WTC11 (cell line): ENCODE measurements at regions of chr22 and their contacts with region 1.

Region 1: GRCh38 chr22:26461188-26461810 is 22.3 kb downstream of the HPS4 start:
- DNase-seq: peak; percentile 88
- ATAC-seq: peak; percentile 99
- H3K4me3 Mint-ChIP-seq: no peak overlapping the region
- H3K27ac Mint-ChIP-seq: peak overlapping the region; percentile 84; the same call in 1 of the 2 replicates
- H3K4me1 Mint-ChIP-seq: peaks cover 4% of the 10 kb centered on the region; the same call in 1 of the 2 replicates
- H3K27me3 Mint-ChIP-seq: no peaks in the 10 kb centered on the region
- CTCF ChIP-seq: peak; percentile 57; the same call in 1 of the 2 replicates

Region 2: DNA sequence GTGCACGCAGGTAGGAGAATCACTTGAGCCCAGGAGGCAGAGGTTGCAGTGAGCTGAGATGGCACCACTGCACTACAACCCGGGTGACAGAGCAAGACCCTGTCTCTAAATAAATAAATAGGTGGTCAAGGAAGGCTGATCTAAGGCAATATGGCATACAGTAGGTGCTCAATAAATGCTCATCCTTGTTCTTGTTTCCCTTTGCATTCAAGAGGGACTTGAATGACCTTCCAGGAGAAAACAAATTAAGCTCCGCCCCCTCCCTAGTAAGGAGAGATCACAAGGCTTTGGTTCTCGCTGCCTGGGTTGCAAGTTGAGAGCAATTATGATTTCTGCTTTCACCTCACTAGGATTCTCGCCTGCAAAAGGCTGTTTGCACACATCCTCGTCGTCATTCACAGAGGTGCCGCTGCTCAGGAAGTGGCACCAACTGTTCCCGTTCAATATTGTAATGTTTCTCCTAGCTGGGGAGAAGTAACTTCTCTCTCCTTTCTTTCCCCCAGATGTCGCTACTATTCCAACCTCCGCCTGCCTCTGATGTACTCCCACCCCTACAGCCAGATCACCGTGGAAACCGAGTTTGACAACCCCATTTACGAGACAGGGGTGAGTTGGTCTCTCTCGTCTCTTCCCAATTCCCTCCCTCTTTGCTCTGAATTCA is 84.0 kb before region 1 on chr22:
- CTCF ChIA-PET with region 1: interaction called, 20 read pairs
- POLR2A ChIA-PET with region 1: no interaction called
- DNase-seq: no peak
- ATAC-seq: peak; percentile 89
- H3K4me3 Mint-ChIP-seq: peak overlapping the region; percentile 57
- H3K27ac Mint-ChIP-seq: no peak overlapping the region; the same call in 1 of the 2 replicates
- H3K4me1 Mint-ChIP-seq: peaks cover 21% of the 10 kb centered on the region
- H3K27me3 Mint-ChIP-seq: peaks cover 36% of the 10 kb centered on the region
- CTCF ChIP-seq: no peak

Region 3: DNA sequence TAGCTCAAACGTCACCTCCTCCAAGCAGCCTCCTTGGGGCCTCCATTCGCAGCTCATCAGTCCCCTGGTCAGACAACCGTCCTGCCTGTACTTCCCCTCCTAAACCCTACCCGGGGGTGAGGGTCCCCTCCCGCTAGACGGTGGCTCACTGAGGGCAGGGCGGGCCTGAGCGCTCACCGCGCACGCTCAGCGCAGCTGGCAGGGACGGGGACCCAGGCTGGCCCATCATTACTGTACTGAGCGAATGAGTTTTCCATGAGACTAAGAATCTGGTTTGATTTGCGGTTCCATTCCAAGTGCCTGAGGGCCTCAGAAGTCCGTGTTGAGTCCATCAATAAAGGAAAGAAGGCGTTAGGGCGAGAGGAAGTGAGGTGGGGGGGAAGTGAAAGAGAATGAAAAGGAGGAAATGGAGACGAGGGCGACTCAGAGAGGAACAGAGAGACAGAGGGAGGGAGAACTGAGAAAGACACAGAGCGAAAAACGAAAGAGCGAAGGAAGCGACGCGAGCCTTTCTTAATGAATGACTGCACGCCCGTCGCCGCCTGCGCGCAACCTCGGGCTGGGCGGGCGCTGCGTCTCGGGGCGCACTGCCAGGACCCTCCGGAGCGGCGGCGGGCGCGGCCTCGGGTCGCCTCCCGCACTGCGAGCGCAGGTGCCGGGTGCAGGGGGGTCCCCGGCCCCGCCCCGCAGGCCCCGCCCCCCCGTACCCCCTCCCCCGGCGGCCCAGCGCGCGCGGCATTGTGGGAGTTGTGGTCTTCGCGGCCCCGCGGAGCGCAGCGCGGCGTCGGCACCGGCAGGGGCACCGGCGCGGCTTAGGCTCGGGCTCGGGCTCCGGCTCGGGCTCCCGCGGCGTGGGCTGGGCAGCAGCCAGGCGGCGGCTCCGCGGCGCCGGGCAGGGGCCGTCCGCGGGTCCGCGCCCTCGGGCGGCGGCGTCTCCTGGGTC is 32.5 kb before region 1 on chr22 and contains the start of gene ASPHD2:
- CTCF ChIA-PET with region 1: interaction called, 11 read pairs
- POLR2A ChIA-PET with region 1: no interaction called
- DNase-seq: peak; percentile 74
- ATAC-seq: peak; percentile 86
- H3K4me3 Mint-ChIP-seq: peak within 1 kb of the TSS; percentile 90
- H3K27ac Mint-ChIP-seq: peak within 1 kb of the TSS; percentile 25; the same call in 1 of the 2 replicates
- H3K4me1 Mint-ChIP-seq: peaks cover 15% of the 10 kb centered on the region
- H3K27me3 Mint-ChIP-seq: peaks cover 48% of the 10 kb centered on the region
- CTCF ChIP-seq: no peak
- total RNA-seq, gene ASPHD2: 7.1 to 8.1 TPM (median 8.0 TPM) in 3 replicates

Region 4: DNA sequence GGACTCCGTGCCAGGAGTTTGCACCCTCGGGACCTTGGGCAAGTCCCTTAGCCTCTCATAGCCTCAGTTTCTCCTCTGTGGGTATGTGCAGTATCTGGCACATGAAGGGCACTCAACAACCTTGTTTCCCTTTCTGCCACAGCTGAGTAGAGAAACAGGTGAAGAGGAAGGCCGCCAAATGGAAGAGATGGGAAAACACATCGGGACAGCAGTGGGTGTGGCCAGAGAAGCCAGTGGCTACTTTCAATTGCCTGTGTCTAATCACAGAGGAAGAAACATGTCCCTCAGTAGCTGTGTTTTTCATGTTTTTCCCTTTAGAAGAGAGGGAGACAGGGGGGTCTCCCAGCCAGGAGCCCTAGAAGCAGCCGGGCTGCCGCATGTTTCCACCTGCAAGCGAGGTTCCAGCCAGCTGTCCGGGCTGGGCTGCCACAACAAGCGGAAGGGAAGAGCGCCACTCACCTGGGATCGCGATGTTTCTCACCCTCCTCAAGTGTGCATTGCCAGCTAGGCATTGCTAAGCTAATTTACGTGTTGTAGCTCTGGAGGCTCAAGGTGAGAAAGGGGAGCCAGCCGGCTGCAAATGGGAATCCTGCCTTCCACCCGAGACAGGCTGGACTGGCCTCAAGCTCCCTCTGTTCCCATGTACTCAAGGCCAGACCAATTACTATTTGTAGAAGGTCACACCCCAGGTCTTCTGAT is 15.6 kb before region 1 on chr22:
- CTCF ChIA-PET with region 1: interaction called, 22 read pairs
- POLR2A ChIA-PET with region 1: no interaction called
- DNase-seq: no peak
- ATAC-seq: no peak
- H3K4me3 Mint-ChIP-seq: no peak overlapping the region
- H3K27ac Mint-ChIP-seq: peak overlapping the region; percentile 12; the same call in 1 of the 2 replicates
- H3K4me1 Mint-ChIP-seq: peaks cover 5% of the 10 kb centered on the region
- H3K27me3 Mint-ChIP-seq: no peaks in the 10 kb centered on the region
- CTCF ChIP-seq: no peak